Endothelial cell of umbilical vein (primary cell): ENCODE measurements at regions of chr21 and their contacts with region 1.

Region 1: DNA sequence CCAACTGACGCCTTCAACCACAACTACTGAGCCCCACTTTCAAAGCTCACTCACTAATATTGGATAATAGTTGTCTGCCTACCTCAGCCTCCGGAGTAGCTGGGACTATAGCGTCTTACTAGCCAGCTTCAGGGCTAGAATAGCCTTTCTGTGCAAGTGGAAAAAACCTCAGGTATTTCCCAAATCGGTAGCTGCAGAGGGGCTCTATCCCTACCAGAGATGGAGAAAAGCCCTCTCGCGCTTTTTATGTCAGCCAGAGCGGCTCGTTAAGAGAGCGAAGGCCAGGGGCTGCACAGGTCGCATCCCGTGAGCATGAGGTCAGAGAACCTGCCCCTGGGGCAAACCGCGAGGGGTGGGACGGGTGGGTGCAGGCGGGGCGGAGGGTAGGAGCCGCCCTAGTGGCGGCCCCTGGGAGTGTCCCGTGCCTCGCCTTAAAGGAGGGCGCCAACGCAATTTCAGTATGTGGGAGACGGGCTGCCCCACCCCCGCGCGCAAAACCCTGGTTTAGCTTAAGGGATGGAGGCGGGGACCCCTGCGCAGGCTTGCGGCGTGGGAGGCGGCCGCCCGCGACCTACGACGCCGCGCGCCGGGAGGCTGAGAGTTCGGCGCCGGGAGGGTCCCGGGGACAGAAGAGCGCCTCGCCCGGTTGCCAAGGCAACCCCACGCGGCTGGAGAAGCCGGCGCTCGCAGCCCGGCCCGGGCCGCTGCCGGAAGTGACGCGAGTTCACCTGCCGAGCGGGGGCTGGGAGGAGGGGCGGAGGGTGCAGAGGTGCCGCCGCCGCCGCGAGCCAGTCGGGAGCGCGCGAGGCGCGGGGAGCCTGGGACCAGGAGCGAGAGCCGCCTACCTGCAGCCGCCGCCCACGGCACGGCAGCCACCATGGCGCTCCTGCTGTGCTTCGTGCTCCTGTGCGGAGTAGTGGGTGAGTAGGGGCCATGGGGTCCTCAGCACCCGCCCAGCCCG is at the start of gene CXADR:
- DNase-seq: peak; percentile 48
- H3K4me3 ChIP-seq: peak within 1 kb of the TSS; percentile 11 to 97 (median 73)
- H3K27ac ChIP-seq: peak within 1 kb of the TSS; percentile 26
- H3K4me1 ChIP-seq: peaks cover 15% of the 10 kb centered on the region
- H3K27me3 ChIP-seq: peaks cover 2 to 19% of the 10 kb centered on the region in 2 experiments
- CTCF ChIP-seq: peak; percentile 21 to 77
- POLR2A ChIP-seq: no peak
- total RNA-seq, gene CXADR: 10.7 and 12.2 TPM in 2 replicates

Region 2: DNA sequence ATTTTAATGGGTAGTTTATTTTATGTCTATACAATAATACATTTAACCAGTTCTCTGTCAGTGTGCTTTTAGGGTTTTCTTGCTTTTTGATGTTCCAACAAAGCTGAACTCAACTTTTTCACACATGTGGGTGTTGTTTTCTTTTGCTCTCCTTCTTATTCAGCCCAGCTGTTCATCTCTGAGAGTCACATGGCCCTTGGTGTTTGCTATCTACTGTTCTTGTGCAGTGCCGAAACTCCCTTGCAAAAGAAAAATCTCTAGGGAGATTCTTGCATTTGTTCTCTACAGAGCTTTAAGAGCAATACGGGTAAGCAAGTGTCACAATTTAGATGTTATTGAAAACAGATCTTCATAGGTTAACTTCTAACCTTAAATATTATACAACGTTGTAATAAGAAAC is 280.8 kb before region 1 on chr21:
- CTCF ChIA-PET with region 1: no interaction called
- POLR2A ChIA-PET with region 1: no interaction called
- dilution Hi-C with region 1: no loop called
- intact Hi-C with region 1: no loop called
- DNase-seq: no peak
- H3K4me3 ChIP-seq: no peak overlapping the region
- H3K27ac ChIP-seq: no peak overlapping the region
- H3K4me1 ChIP-seq: no peaks in the 10 kb centered on the region
- H3K27me3 ChIP-seq: no peaks in the 10 kb centered on the region
- CTCF ChIP-seq: no peak
- POLR2A ChIP-seq: no peak

Region 3: DNA sequence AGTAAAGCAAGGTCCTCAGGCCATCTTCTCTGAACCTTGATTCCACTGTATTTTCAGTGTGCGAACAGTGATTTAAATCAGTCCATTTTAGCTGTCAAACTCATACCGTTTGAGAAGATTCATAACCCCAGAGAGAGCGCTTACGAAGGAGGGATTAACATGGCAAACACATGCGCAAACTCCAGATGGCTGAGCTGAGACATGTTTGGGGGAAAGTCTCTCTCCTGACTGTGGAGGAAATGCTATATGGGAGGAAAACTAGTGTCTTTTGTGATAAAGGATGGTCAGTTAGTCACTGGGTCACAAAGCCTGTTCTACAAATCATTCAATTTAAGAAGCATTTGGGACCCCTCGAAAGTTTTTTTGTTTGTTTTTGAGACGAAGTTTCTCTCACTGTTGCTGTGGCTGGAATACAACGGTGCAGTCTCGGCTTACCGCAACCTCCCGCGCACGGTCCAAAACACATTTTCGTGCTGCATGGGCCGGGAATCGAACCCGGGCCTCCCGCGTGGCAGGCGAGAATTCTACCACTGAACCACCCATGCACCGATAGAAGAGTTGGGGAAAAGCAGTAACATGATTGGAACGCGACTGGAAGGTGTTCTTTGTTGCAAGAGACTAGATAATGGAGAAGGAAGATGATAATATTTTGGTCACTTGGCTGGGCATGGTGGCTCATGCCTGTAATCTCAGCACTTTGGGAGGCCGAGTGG is 58.1 kb before region 1 on chr21:
- CTCF ChIA-PET with region 1: interaction called, 7 read pairs
- POLR2A ChIA-PET with region 1: no interaction called
- dilution Hi-C with region 1: no loop called
- intact Hi-C with region 1: loop called (anchors 1 kb)
- DNase-seq: peak; percentile 73
- H3K4me3 ChIP-seq: no peak overlapping the region
- H3K27ac ChIP-seq: peak overlapping the region; percentile 43
- H3K4me1 ChIP-seq: peaks cover 15% of the 10 kb centered on the region
- H3K27me3 ChIP-seq: no peaks in the 10 kb centered on the region
- CTCF ChIP-seq: no peak
- POLR2A ChIP-seq: no peak

Region 4: GRCh38 chr21:17491716-17492414 is 20.7 kb before region 1 on chr21:
- CTCF ChIA-PET with region 1: interaction called, 19 read pairs
- POLR2A ChIA-PET with region 1: no interaction called
- dilution Hi-C with region 1: no loop called
- intact Hi-C with region 1: loop called (anchors 1 kb)
- DNase-seq: peak; percentile 89
- H3K4me3 ChIP-seq: no peak overlapping the region
- H3K27ac ChIP-seq: peak overlapping the region; percentile 72
- H3K4me1 ChIP-seq: peaks cover 45% of the 10 kb centered on the region
- H3K27me3 ChIP-seq: no peaks in the 10 kb centered on the region
- CTCF ChIP-seq: no peak
- POLR2A ChIP-seq: no peak

Region 5: DNA sequence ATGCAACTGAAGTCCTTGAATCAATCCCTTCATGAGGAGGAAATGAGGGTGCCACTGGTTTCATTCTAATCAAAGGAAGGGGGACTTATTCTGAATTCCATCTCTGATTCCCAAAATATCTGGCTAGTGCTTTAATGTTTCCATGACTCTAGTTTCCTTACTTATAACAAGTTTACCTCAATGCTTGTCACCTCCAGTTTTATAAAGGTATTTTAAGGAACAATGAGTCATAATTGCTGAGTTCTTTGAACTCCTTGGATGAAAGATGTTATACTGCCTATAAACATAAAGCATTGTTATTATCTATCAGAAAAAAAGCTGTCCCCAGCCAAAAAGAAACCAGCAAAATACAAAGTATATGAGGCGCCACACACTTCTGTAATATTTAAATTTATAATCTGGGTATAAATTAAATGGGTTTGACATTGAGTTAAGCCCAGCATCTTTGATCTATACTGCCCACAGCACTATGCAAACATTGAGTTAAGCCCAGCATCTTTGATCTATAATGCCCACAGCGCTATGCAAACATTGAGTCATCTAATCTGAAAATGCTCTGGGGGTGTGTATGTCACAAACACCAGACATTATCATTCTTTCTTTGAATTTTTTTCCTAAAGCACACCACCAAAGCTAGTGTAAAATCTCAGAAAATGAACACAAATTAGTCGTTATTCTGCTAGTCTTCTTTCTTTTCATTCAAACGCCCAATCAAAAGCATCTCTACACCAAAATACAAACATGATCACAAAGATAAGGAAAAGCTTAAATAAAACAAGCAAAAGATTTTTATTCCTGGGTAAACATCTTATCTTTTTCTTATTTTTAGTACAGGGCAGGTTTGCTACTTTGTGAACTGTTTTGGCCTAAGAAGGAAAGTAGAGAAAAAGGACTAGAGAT is 11.2 kb before region 1 on chr21:
- CTCF ChIA-PET with region 1: interaction called, 13 read pairs
- POLR2A ChIA-PET with region 1: no interaction called
- dilution Hi-C with region 1: no loop called
- intact Hi-C with region 1: no loop called
- DNase-seq: no peak
- H3K4me3 ChIP-seq: no peak overlapping the region
- H3K27ac ChIP-seq: no peak overlapping the region
- H3K4me1 ChIP-seq: no peaks in the 10 kb centered on the region
- H3K27me3 ChIP-seq: peaks cover 0 to 1% of the 10 kb centered on the region in 2 experiments
- CTCF ChIP-seq: no peak
- POLR2A ChIP-seq: no peak

Region 6: GRCh38 chr21:17554679-17555465 is 42.3 kb after region 1 on chr21:
- CTCF ChIA-PET with region 1: interaction called, 14 read pairs
- POLR2A ChIA-PET with region 1: no interaction called
- dilution Hi-C with region 1: no loop called
- intact Hi-C with region 1: loop called (anchors 2 kb)
- DNase-seq: peak; percentile 25
- H3K4me3 ChIP-seq: no peak overlapping the region
- H3K27ac ChIP-seq: no peak overlapping the region
- H3K4me1 ChIP-seq: no peaks in the 10 kb centered on the region
- H3K27me3 ChIP-seq: no peaks in the 10 kb centered on the region
- CTCF ChIP-seq: peak; percentile 23 to 30
- POLR2A ChIP-seq: no peak

Region 7: GRCh38 chr21:17585875-17586450 is 73.4 kb after region 1 on chr21:
- CTCF ChIA-PET with region 1: interaction called, 11 read pairs
- POLR2A ChIA-PET with region 1: no interaction called
- dilution Hi-C with region 1: no loop called
- intact Hi-C with region 1: loop called (anchors 1 kb)
- DNase-seq: peak; percentile 56
- H3K4me3 ChIP-seq: no peak overlapping the region
- H3K27ac ChIP-seq: no peak overlapping the region
- H3K4me1 ChIP-seq: no peaks in the 10 kb centered on the region
- H3K27me3 ChIP-seq: peaks cover 0 to 2% of the 10 kb centered on the region in 2 experiments
- CTCF ChIP-seq: peak; percentile 37 to 51
- POLR2A ChIP-seq: no peak

Region 8: GRCh38 chr21:17611414-17612022 is 99.0 kb after region 1 on chr21:
- CTCF ChIA-PET with region 1: interaction called, 10 read pairs
- POLR2A ChIA-PET with region 1: no interaction called
- dilution Hi-C with region 1: no loop called
- intact Hi-C with region 1: loop called (anchors 2 kb)
- DNase-seq: peak; percentile 93
- H3K4me3 ChIP-seq: peak overlapping the region; percentile 76 to 94 (median 93)
- H3K27ac ChIP-seq: peak overlapping the region; percentile 97
- H3K4me1 ChIP-seq: peaks cover 10% of the 10 kb centered on the region
- H3K27me3 ChIP-seq: peaks cover 0 to 2% of the 10 kb centered on the region in 2 experiments
- CTCF ChIP-seq: no peak
- POLR2A ChIP-seq: peak; percentile 27

Region 9: DNA sequence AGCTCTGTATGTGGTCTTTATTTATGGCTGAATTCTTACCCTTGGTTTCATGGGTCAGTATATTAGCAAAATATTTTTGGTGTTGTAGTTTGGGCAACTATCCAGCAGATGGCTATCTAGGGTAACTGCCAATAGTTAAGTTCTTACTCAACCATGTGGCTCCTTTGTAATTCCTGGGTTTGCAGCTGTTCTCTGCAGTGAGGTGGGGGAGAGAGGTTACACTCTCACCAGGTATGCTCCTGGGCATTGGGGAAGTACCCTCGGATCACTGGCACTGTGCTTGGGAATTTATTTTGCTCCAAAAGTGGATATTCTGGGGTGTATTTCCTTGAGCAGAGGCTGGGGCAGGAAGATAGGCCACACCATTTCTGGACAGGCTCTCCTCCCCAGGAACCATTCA is 1327.7 kb after region 1 on chr21:
- CTCF ChIA-PET with region 1: no interaction called
- POLR2A ChIA-PET with region 1: no interaction called
- dilution Hi-C with region 1: no loop called
- intact Hi-C with region 1: no loop called
- DNase-seq: peak; percentile 6
- H3K4me3 ChIP-seq: no peak overlapping the region
- H3K27ac ChIP-seq: no peak overlapping the region
- H3K4me1 ChIP-seq: no peaks in the 10 kb centered on the region
- H3K27me3 ChIP-seq: no peaks in the 10 kb centered on the region
- CTCF ChIP-seq: peak; percentile 8 to 20
- POLR2A ChIP-seq: no peak